Ovary (tissue), 10 donors: ENCODE measurements at regions of chr11 and their contacts with region 1.

Region 1: GRCh38 chr11:47186076-47186936 is at the start of gene PACSIN3:
- DNase-seq: peak; percentile 53 to 76 (median 67)
- H3K4me3 ChIP-seq: peak within 1 kb of the TSS; percentile 61
- H3K27ac ChIP-seq: peak within 1 kb of the TSS; percentile 81 to 94
- H3K4me1 ChIP-seq: peaks cover 8% of the 10 kb centered on the region
- H3K27me3 ChIP-seq: no peaks in the 10 kb centered on the region
- CTCF ChIP-seq: no peak
- EP300 ChIP-seq: no peak
- POLR2A ChIP-seq: peak; percentile 23
- total RNA-seq, gene PACSIN3: 26.1 to 69.8 (median 40.8) TPM

Region 2: GRCh38 chr11:47213985-47214564 is 27.8 kb after region 1 on chr11:
- intact Hi-C with region 1: loop called in 1 of 4 experiments (anchors 2 kb)
- DNase-seq: peak; percentile 88 to 92 (median 91)
- H3K4me3 ChIP-seq: peak overlapping the region; percentile 72
- H3K27ac ChIP-seq: peak overlapping the region; percentile 88 to 93
- H3K4me1 ChIP-seq: peaks cover 10% of the 10 kb centered on the region
- H3K27me3 ChIP-seq: no peaks in the 10 kb centered on the region
- CTCF ChIP-seq: no peak
- EP300 ChIP-seq: no peak
- POLR2A ChIP-seq: peak; percentile 42

Region 3: GRCh38 chr11:47259178-47259977 is 73.1 kb after region 1 on chr11:
- intact Hi-C with region 1: loop called in 1 of 4 experiments (anchors 5 kb)
- DNase-seq: no peak
- H3K4me3 ChIP-seq: no peak overlapping the region
- H3K27ac ChIP-seq: no peak overlapping the region
- H3K4me1 ChIP-seq: peaks cover 10% of the 10 kb centered on the region
- H3K27me3 ChIP-seq: no peaks in the 10 kb centered on the region
- CTCF ChIP-seq: no peak
- EP300 ChIP-seq: no peak
- POLR2A ChIP-seq: no peak

Region 4: DNA sequence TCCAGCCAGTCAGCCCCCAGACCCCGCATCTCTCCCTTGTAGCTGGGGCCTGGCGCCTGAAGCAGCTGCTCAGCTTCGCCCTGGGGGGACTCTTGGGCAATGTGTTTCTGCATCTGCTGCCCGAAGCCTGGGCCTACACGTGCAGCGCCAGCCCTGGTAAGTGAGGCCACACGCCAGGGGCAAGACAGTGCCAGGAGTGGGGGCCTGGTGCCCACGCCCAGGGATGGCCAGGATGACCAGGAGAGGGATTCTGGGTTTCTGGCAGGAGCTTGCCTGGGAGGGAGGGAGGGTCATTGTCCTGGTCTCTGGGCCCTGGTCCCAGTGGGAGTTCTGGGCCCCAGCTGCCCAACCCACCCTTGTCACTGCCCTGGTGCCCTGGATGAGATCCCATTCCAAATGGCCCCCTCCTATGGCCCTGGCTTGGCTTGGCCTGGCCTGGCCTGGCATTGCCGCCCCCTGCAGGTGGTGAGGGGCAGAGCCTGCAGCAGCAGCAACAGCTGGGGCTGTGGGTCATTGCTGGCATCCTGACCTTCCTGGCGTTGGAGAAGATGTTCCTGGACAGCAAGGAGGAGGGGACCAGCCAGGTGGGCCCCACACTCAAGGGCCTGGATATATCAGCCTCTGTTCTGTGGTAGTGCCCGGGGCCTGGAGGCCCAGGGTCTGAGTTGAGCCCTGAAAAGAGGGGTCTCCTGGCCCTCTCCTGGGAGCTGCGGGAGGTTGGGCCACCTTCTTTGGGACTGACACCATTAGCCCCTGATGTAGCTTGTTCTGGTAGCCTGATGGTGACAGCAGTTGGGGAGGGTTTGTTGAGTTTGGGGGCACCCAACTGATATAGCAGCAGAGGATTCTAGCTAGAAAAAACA is 225.8 kb after region 1 on chr11:
- intact Hi-C with region 1: loop called in 1 of 4 experiments (anchors 10 kb)
- DNase-seq: peak in 2 of 5 donors; percentile 41 to 62
- H3K4me3 ChIP-seq: no peak overlapping the region
- H3K27ac ChIP-seq: no peak overlapping the region
- H3K4me1 ChIP-seq: peaks cover 5% of the 10 kb centered on the region
- H3K27me3 ChIP-seq: no peaks in the 10 kb centered on the region
- CTCF ChIP-seq: peak in 1 of 3 donors; percentile 18
- EP300 ChIP-seq: no peak
- POLR2A ChIP-seq: no peak